ENCODE measurements at regions of chr10 and their contacts with region 1.

Region 1: DNA sequence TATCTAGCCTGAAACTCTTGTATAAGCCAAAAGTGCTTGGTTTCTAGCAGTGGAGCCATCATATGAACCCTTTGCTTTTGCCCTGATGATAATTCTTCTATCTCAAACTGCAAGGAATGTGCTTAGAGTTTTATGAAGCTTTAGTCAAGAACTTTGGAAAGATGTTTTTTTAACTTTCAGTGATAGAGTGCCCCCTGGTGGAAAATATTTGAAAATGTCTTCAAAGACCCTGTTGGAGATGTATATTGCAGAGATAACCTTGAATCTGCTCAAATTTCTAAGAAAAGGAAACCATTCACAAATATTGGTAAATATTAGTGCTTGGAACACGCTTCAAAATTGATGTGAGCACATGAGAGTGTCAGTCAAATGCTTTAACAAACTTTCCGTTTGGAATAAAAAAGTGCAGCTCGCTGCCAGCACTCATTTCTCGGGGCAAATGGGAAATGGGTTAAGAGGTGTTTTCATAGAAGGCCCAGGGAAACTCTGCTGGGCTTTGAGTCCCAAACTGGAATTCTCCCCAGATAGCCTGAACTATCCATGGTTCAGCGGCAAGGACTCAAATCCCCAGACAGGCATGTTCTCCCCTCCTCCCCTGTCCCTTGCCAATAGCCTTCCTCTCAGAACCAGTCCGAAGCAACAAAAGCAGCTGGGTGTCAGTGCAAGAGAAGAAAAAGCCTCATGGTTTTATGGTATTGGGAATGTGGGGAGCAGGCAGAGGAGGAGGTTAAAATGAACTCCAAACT is 129.3 kb downstream of the MYOF start:
- DNase-seq: no peak
- ATAC-seq: no peak

Region 2: GRCh38 chr10:93080350-93081046 is 272.3 kb before region 1 on chr10:
- intact Hi-C with region 1: loop called (anchors 5 kb)
- DNase-seq: no peak
- ATAC-seq: peak; percentile 50

Region 3: GRCh38 chr10:93309062-93309461 is 43.7 kb before region 1 on chr10:
- intact Hi-C with region 1: no loop called
- DNase-seq: no peak
- ATAC-seq: peak; percentile 37